Right lobe of liver (tissue), 6 donors: ENCODE measurements at regions of chr7 and their contacts with region 1.

Region 1: GRCh38 chr7:95675016-95675415 is 78.7 kb upstream of the PDK4 start:
- DNase-seq: no peak
- ATAC-seq: no peak
- H3K4me3 ChIP-seq: no peak overlapping the region
- H3K27ac ChIP-seq: no peak overlapping the region
- H3K4me1 ChIP-seq: no peaks in the 10 kb centered on the region
- H3K27me3 ChIP-seq: no peaks in the 10 kb centered on the region
- CTCF ChIP-seq: no peak
- POLR2A ChIP-seq: no peak

Region 2: DNA sequence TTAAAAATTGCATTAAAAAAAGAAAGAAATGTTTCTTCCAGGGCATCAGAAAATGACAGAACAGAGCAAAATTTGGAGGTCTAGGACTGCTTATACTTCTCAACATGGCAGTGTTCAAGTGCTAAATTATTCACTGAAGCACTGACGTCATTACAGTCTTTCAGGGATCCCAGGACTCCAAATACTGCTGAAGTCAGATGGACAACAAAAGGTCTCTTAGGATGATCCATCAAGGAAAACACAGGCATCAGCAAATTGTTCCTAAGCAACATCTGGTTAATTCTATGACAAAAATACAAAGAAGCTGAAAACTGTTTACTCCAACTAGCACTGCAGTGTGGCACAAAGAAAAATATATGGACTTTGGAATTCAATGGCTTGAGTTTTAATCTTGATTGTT is 130.8 kb before region 1 on chr7:
- intact Hi-C with region 1: loop called in 1 of 2 experiments (anchors 5 kb)
- DNase-seq: no peak
- ATAC-seq: no peak
- H3K4me3 ChIP-seq: no peak overlapping the region
- H3K27ac ChIP-seq: peak overlapping the region in 1 of 3 donors; percentile 93
- H3K4me1 ChIP-seq: peaks cover 0 to 44% (median 21%) of the 10 kb centered on the region in 4 donors
- H3K27me3 ChIP-seq: no peaks in the 10 kb centered on the region
- CTCF ChIP-seq: no peak
- POLR2A ChIP-seq: no peak

Region 3: GRCh38 chr7:95582578-95583293 is 92.3 kb before region 1 on chr7:
- intact Hi-C with region 1: no loop called
- DNase-seq: no peak
- ATAC-seq: peak in 3 of 4 donors; percentile 8 to 39 (median 15)
- H3K4me3 ChIP-seq: no peak overlapping the region
- H3K27ac ChIP-seq: peak overlapping the region in 1 of 3 donors; percentile 24
- H3K4me1 ChIP-seq: peaks cover 0 to 21% (median 2%) of the 10 kb centered on the region in 4 donors
- H3K27me3 ChIP-seq: no peaks in the 10 kb centered on the region
- CTCF ChIP-seq: no peak
- POLR2A ChIP-seq: no peak